ENCODE measurements at regions of chr2 and their contacts with region 1.

Region 1: DNA sequence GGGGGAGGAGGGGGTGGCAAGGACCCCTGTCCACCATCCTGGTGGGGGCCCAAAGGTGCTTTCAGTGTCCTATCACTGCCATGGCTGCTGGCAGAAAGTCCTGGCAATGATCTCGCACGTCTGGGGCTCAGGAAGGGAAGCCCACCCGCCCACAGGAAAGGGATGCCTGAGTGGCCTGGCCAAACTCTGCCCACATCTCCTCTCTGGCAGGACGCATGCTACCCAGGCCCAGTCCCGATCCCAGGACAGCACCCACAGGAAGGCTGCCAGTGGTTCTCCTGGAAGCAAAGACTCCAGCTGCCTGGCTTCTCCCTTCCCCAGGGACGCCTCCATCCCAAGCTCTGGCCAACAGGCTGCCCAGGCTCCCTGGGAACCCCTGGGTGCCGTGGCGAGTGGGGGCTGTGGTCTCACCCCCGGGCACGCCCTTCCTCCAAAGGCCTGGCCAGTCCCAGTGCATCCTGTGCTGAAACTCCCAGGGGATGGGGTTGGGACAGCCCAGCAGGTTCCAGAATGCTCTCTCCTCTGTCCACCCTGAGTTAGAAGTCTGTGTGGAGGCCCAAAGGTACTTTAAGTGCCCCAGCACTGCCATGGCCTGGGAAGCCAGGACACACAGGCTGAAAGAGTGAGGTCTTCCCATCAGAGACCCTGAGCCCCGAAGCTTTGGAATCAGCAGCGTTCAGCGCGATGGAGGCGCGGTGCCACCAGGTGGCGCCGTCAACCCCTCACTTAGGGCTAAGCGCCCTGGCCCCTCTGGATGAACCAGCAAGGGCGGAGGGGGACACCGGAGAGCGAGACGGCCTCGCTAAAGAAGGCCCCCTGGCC is 29.8 kb upstream of the TAF1B start:
- DNase-seq: peak; percentile 74
- H3K4me3 Mint-ChIP-seq: no peak overlapping the region
- H3K27ac Mint-ChIP-seq: no peak overlapping the region
- H3K4me1 Mint-ChIP-seq: peaks cover 6% of the 10 kb centered on the region
- H3K27me3 Mint-ChIP-seq: no peaks in the 10 kb centered on the region
- CTCF ChIP-seq: peak; percentile 95

Region 2: GRCh38 chr2:9618410-9618809 is 195.1 kb before region 1 on chr2:
- CTCF ChIA-PET with region 1: no interaction called
- POLR2A ChIA-PET with region 1: no interaction called
- intact Hi-C with region 1: no loop called
- DNase-seq: no peak
- H3K4me3 Mint-ChIP-seq: no peak overlapping the region
- H3K27ac Mint-ChIP-seq: no peak overlapping the region
- H3K4me1 Mint-ChIP-seq: peaks cover 39% of the 10 kb centered on the region
- H3K27me3 Mint-ChIP-seq: no peaks in the 10 kb centered on the region
- CTCF ChIP-seq: no peak

Region 3: DNA sequence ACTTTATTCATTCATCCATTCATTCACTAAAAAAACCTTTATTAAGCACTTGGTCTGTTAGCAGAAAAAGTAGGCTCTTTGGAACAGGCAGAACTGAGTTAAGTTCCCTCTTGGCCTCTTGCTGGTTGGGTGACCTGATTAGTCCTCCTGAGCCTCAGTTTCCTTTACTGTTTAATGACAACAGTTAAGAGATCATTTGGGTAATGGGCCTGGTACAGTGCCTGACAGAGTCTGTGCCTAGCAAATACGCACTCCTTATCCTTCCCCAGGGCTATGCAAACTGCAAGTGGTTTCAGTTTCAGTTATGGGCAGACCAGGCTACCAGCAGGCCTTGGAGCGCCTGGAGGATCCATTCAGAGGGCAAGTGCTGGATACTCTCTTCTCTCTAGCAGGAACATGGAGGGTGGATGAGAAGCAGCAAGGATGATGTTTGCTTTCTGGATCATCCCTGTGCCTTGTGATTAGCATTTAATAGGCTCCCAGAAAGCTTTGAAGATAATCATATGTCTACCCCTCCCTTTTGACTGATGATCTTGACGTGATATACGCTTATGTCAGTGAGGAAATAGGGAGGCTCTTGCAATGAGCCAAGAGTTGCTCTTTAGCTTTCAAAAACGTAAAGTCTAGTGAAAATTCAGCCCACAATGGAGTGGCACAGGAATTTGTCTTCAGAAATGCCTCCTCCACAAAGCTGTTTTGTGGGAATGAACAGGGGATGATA is 17.3 kb after region 1 on chr2:
- CTCF ChIA-PET with region 1: interaction called, 17 read pairs
- POLR2A ChIA-PET with region 1: no interaction called
- intact Hi-C with region 1: no loop called
- DNase-seq: no peak
- H3K4me3 Mint-ChIP-seq: no peak overlapping the region
- H3K27ac Mint-ChIP-seq: no peak overlapping the region
- H3K4me1 Mint-ChIP-seq: no peaks in the 10 kb centered on the region
- H3K27me3 Mint-ChIP-seq: no peaks in the 10 kb centered on the region
- CTCF ChIP-seq: no peak

Region 4: GRCh38 chr2:9843229-9844035 is 29.9 kb after region 1 on chr2 and contains the start of gene TAF1B:
- CTCF ChIA-PET with region 1: interaction called, 50 read pairs
- POLR2A ChIA-PET with region 1: interaction called, 22 read pairs
- intact Hi-C with region 1: no loop called
- DNase-seq: peak; percentile 94
- H3K4me3 Mint-ChIP-seq: peak within 1 kb of the TSS; percentile 82
- H3K27ac Mint-ChIP-seq: peak within 1 kb of the TSS; percentile 92
- H3K4me1 Mint-ChIP-seq: peaks cover 40% of the 10 kb centered on the region
- H3K27me3 Mint-ChIP-seq: no peaks in the 10 kb centered on the region
- CTCF ChIP-seq: no peak
- total RNA-seq, gene TAF1B: 19.7 and 25.5 TPM in 2 replicates

Region 5: DNA sequence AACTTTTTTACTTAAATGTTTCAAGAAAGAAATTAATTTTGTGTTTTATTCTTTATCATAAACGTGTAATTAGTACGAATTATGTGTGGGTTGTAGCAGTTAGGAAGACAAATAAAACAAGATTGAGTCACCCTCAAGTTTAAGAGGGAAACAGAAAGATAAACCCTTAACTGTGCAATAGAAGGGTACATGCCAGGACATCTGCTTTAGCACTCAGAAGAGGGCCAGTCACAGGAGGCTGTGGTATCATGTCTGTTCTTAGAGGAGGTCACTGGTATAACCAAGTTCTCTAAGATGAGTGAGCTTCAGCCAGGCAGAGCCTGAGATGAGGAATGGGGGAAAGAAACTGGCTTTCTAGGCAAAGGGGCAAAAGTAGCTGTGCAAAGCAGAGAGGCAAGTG is 95.6 kb after region 1 on chr2:
- CTCF ChIA-PET with region 1: interaction called, 63 read pairs
- POLR2A ChIA-PET with region 1: interaction called, 11 read pairs
- intact Hi-C with region 1: loop called (anchors 1 kb)
- DNase-seq: no peak
- H3K4me3 Mint-ChIP-seq: no peak overlapping the region
- H3K27ac Mint-ChIP-seq: no peak overlapping the region
- H3K4me1 Mint-ChIP-seq: peaks cover 9% of the 10 kb centered on the region
- H3K27me3 Mint-ChIP-seq: no peaks in the 10 kb centered on the region
- CTCF ChIP-seq: no peak

Region 6: DNA sequence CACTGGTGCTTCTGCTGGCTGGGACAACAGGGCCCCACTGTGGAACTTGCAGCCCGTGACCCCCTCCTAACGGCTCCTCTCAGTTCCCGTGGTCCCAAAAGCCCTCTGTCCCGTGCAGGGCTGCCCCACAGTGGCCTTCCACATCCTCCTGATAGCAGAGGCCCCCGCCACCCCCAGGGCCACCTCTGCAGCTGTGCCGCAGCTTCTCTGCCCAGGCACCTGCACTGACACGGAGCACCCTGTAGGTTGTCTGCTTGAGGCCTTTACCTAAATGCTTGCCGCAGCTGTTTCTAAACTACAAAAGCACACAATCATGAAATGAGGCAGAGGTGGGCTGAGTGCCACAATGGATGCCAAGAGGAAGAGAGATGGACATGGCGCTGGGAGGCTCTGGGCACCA is 124.4 kb after region 1 on chr2:
- CTCF ChIA-PET with region 1: interaction called, 10 read pairs
- POLR2A ChIA-PET with region 1: no interaction called
- intact Hi-C with region 1: no loop called
- DNase-seq: no peak
- H3K4me3 Mint-ChIP-seq: no peak overlapping the region
- H3K27ac Mint-ChIP-seq: no peak overlapping the region
- H3K4me1 Mint-ChIP-seq: no peaks in the 10 kb centered on the region
- H3K27me3 Mint-ChIP-seq: no peaks in the 10 kb centered on the region
- CTCF ChIP-seq: no peak

Region 7: DNA sequence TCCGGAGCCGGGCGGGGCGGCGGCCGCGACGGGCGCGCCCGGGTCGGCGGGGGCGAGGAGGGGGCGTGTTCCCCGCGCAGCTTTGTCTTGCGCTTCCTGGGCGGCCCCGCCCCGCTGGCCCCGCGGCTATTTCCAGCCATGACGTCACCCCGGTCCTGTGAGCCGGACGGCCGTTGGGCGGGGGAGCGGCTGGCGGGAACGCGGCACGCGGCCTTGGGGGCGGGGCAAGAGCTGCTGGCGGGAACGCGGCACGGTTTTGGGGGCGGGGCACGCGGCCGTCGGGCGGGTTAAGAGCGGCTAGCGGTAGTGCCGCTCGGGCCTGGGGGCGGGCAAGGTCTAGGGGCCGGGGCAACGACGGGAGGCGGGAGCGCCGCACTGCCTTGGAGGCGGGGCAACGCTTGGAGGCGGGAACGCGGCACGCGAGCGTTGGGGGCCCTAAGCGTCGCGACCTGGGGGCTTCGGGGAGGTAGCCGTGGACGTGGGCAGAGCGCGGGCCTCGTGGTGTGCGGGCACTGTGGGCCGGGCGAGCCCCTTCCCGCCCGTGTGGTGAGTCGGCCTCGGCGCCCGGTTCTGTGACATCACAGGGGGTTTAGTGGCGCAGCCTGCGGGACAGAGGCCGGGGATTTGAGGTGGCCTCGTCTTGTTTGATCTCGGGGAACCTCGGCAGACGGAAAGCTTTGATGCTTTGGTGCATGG is 230.5 kb after region 1 on chr2:
- CTCF ChIA-PET with region 1: interaction called, 22 read pairs
- POLR2A ChIA-PET with region 1: interaction called, 4 read pairs
- intact Hi-C with region 1: no loop called
- DNase-seq: peak; percentile 92
- H3K4me3 Mint-ChIP-seq: peak overlapping the region; percentile 73
- H3K27ac Mint-ChIP-seq: peak overlapping the region; percentile 75
- H3K4me1 Mint-ChIP-seq: peaks cover 4% of the 10 kb centered on the region
- H3K27me3 Mint-ChIP-seq: no peaks in the 10 kb centered on the region
- CTCF ChIP-seq: no peak